Naive thymus-derived CD8-positive, alpha-beta T cell (primary cell): ENCODE measurements at regions of chr12 and their contacts with region 1.

Region 1: GRCh38 chr12:76559400-76560085 is at the start of gene OSBPL8:
- DNase-seq: peak; percentile 89 to 97 (median 94)
- ATAC-seq: peak; percentile 65
- H3K4me3 Mint-ChIP-seq: peak within 1 kb of the TSS; percentile 92 to 99 (median 94)
- H3K27ac Mint-ChIP-seq: peak within 1 kb of the TSS; percentile 95 to 99 (median 98)
- H3K4me1 Mint-ChIP-seq: peaks cover 12 to 49% (median 38%) of the 10 kb centered on the region in 4 donors
- H3K27me3 Mint-ChIP-seq: no peaks in the 10 kb centered on the region
- polyA plus RNA-seq, gene OSBPL8: 103 to 143 (median 130) TPM

Region 2: DNA sequence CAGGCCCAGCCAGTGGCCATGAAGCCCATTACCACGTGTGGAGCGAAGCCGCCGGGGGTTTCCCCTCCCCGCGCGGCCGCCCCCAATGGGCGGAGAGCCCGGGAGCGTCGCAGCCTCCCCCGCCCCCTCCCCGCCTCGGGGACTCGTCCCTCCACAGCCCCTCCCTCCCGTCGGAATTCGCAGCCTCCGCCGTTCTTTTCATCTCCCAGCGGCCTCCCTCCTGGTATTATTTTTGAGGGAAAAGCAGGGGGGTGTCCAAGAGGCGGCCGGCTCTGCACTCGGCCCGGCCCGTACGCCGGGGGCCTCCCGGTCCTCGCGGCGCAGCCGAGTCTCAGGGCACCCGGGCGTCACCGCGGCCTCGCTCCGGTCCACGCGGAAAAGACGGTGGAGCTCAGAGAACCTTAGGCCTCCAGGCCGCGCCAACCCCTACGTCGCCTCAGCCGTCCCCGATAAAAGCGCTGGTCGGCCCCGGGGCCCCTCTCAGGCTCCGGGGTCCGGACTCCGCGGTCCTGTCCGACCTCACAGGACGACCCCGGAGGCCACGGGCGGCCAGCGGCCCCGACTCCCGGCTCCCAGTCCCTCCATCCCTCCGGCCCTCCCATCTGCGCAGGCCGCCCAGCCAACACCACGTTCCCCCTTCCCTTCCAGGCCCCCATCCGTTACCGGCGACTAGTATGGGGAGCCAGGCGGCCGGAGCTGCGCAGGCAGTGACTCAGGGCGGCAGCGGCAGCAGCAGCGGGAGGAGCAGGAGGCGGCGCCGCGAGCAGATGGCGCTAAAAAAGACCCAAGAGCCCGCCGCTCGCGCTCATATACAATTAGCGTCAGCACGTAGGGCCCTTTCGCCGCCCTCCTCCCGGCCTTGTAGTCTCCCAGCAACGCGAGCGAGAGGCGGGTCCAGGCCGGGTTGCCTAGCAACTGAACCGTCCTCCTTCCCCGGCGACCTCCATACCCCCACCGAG is 475.4 kb before region 1 on chr12 and contains the start of gene NAP1L1:
- POLR2A ChIA-PET with region 1: interaction called, 10 read pairs
- DNase-seq: peak; percentile 89 to 99 (median 97)
- ATAC-seq: peak; percentile 81
- H3K4me3 Mint-ChIP-seq: peak within 1 kb of the TSS; percentile 95 to 100 (median 99)
- H3K27ac Mint-ChIP-seq: peak within 1 kb of the TSS; percentile 98 to 100 (median 100)
- H3K4me1 Mint-ChIP-seq: peaks cover 24 to 64% (median 60%) of the 10 kb centered on the region in 4 donors
- H3K27me3 Mint-ChIP-seq: no peaks in the 10 kb centered on the region
- polyA plus RNA-seq, gene NAP1L1: 199 to 224 (median 210) TPM

Region 3: DNA sequence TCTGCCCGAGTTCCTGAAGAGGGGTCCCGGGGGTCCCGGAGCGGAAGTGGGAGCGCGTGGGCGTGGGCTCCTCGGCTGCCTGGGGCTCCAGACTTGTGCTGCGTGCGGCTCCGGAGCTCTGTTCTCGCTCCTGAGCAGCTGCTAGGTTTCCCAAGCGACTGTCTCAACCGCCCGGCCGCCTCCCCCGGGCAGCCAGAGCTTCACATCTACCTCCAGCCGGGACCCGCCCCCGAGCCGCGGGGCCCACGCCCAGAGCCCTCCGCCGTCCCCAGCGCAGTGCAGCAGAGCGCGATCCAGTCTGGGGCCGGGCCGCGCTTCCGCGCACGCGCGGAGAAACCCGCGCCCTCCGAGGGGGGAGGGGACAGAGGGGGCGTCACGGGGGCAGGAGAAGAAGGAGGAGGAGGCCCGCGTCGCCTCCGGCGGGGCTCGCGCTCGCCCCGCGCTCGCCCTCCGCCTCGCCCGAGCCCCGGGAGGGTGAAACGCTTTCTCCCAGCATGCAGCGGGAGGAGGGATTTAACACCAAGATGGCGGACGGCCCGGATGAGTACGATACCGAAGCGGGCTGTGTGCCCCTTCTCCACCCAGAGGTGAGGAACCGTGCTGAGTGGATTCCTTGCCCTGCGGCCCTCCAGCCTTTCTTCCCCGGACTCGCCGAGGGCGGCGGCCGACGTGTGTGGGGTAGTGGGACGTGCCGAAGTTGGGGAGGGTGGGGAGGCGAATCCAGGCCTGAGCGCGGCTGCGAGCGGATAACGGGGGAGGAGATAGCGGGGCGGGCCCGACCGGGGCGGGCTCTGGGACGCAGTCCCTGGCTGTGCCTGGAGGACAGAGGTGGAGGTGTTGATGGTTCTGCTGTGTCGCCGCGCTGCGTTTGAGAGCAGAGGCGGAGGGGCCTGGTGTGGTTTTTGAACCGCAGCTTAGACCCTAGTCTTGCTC is 204.5 kb after region 1 on chr12 and contains the start of gene ZDHHC17:
- POLR2A ChIA-PET with region 1: interaction called, 13 read pairs
- DNase-seq: peak; percentile 89 to 95 (median 94)
- ATAC-seq: peak; percentile 83 to 86
- H3K4me3 Mint-ChIP-seq: peak within 1 kb of the TSS; percentile 95 to 99 (median 97)
- H3K27ac Mint-ChIP-seq: peak within 1 kb of the TSS; percentile 94 to 99 (median 98)
- H3K4me1 Mint-ChIP-seq: peaks cover 13 to 57% (median 49%) of the 10 kb centered on the region in 4 donors
- H3K27me3 Mint-ChIP-seq: no peaks in the 10 kb centered on the region
- polyA plus RNA-seq, gene ZDHHC17: 10.1 to 11.5 (median 10.5) TPM